ENCODE measurements at regions of chr5 and their contacts with region 1.

Region 1: GRCh38 chr5:115634343-115635132 is 8.7 kb upstream of the TMED7 start:
- DNase-seq: peak; percentile 78
- ATAC-seq: peak; percentile 99
- H3K4me3 ChIP-seq: peak overlapping the region; percentile 57 to 61 (median 60)
- H3K27ac ChIP-seq: peak overlapping the region; percentile 59
- H3K4me1 ChIP-seq: peaks cover 22% of the 10 kb centered on the region
- H3K27me3 ChIP-seq: 0 out of 5 replicates have a peak, but pooled peaks cover 0 to 2% of the 10 kb centered on the region in 2 experiments
- CTCF ChIP-seq: peak; percentile 89
- EP300 ChIP-seq: no peak
- POLR2A ChIP-seq: peak; percentile 23 to 41; a peak in 1 of 4 replicates
- RAD21 ChIP-seq: peak; percentile 79

Region 2: DNA sequence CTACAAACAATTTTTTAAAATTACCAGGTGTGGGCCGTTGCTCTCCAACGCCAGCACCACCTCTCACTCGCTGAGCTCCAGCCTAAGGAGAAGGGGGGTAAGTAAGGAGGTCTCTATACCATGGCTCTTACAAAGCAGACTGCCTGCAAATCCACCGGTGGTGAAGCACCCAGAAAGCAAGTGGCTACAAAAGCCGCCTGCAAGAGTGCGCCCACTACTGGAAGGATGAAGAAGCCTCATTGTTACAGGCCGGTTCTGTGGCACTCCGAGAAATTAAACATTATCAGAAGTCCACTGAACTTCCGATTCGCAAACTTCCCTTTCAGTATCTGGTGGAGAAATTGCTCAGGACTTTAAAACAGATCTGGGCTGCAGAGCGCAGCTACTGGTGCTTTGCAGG is 135.9 kb after region 1 on chr5:
- CTCF ChIA-PET with region 1: no interaction called
- POLR2A ChIA-PET with region 1: no interaction called
- in situ Hi-C with region 1: no loop called
- intact Hi-C with region 1: loop called (anchors 1 kb)
- DNase-seq: peak; percentile 31
- ATAC-seq: peak; percentile 86
- H3K4me3 ChIP-seq: no peak overlapping the region
- H3K27ac ChIP-seq: no peak overlapping the region
- H3K4me1 ChIP-seq: no peaks in the 10 kb centered on the region
- H3K27me3 ChIP-seq: no peaks in the 10 kb centered on the region
- CTCF ChIP-seq: peak; percentile 48
- EP300 ChIP-seq: no peak
- POLR2A ChIP-seq: no peak
- RAD21 ChIP-seq: no peak

Region 3: DNA sequence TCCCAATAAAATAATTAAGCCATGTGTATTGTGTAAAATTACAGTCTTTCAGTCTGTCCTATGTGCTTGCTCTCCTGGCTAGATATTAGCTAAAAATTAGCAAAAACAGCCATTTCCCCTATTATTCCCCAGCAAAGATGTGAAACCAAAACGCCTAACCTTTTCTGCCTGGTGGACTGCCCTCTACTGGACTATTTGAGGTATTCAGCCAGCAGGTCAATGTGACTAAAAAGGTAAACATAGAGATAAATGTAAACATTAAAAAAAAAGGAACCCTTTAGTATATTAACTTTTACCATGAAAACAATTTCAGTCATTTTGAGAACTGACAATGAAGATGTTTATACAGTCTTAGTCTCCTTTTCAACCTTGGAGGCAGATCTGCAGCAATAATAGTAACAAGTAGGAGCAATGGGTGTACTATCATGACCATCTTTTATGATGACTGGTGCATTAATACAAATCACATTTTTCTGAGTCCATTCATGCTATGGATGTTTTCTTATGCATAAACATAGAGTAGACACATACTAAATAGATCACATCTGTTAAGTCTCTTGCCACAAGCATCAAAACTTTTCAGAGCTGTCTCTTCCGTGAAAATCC is 196.7 kb after region 1 on chr5:
- CTCF ChIA-PET with region 1: interaction called, 18 read pairs
- POLR2A ChIA-PET with region 1: no interaction called
- in situ Hi-C with region 1: no loop called
- intact Hi-C with region 1: loop called (anchors 1 kb)
- DNase-seq: peak; percentile 57
- ATAC-seq: peak; percentile 82
- H3K4me3 ChIP-seq: no peak overlapping the region
- H3K27ac ChIP-seq: no peak overlapping the region
- H3K4me1 ChIP-seq: peaks cover 24% of the 10 kb centered on the region
- H3K27me3 ChIP-seq: no peaks in the 10 kb centered on the region
- CTCF ChIP-seq: peak; percentile 75
- EP300 ChIP-seq: no peak
- POLR2A ChIP-seq: no peak
- RAD21 ChIP-seq: peak; percentile 46; the same call in 1 of the 2 replicates

Region 4: DNA sequence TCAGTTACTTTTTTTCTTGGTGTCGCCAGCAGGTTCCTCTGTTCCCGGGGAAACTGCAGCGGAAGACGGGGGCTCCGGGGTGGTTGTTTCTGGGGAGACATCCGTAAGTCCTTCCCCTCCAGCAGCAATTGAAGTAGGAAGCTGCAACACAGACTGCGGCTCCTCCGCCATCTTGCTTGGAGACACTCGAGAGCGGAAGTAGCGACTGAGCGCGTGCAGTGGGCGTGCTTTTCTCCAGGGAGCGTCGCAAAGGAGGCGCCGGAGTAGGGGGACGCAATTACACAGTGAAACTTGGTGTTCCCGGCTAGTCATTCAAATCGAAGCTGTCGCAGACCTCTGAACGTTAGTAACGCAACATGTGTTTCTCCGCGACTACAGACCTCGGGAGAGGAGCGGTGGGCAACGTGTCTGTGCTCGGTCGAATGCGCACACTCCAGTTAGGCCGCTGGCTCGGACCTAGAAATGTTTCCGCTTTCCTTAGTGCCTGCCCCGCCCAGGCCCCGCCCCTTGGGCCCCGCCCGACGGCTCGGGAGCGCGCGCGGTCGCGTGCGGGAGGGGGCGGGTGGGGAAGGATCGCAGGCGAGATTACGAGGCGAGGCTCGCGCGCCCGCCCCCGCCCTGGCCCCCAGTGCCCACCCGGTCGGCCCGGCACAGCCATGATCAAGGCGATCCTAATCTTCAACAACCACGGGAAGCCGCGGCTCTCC is 207.0 kb after region 1 on chr5 and contains the starts of genes AP3S1 and ATG12:
- CTCF ChIA-PET with region 1: interaction called, 15 read pairs
- POLR2A ChIA-PET with region 1: no interaction called
- in situ Hi-C with region 1: no loop called
- intact Hi-C with region 1: loop called (anchors 1 kb)
- DNase-seq: peak; percentile 88
- ATAC-seq: peak; percentile 85
- H3K4me3 ChIP-seq: peak within 1 kb of the TSS; percentile 77 to 98 (median 91)
- H3K27ac ChIP-seq: peak within 1 kb of the TSS; percentile 99
- H3K4me1 ChIP-seq: peaks cover 50% of the 10 kb centered on the region
- H3K27me3 ChIP-seq: no peaks in the 10 kb centered on the region; a peak in 1 of 5 replicates
- CTCF ChIP-seq: 0 out of 2 replicates have a peak, but pooled peaks have one; percentile 10
- EP300 ChIP-seq: no peak
- POLR2A ChIP-seq: peak; percentile 86 to 93
- RAD21 ChIP-seq: peak; percentile 17; the same call in 1 of the 2 replicates
- total RNA-seq, gene AP3S1: 85.9 and 88.8 TPM in 2 replicates
- total RNA-seq, gene ATG12: 45.1 and 46.4 TPM in 2 replicates

Region 5: GRCh38 chr5:115930626-115931337 is 296.2 kb after region 1 on chr5:
- CTCF ChIA-PET with region 1: no interaction called
- POLR2A ChIA-PET with region 1: no interaction called
- in situ Hi-C with region 1: no loop called
- intact Hi-C with region 1: no loop called
- DNase-seq: no peak
- ATAC-seq: no peak
- H3K4me3 ChIP-seq: no peak overlapping the region
- H3K27ac ChIP-seq: no peak overlapping the region
- H3K4me1 ChIP-seq: no peaks in the 10 kb centered on the region
- H3K27me3 ChIP-seq: no peaks in the 10 kb centered on the region
- CTCF ChIP-seq: no peak
- EP300 ChIP-seq: no peak
- POLR2A ChIP-seq: no peak
- RAD21 ChIP-seq: no peak

Region 6: DNA sequence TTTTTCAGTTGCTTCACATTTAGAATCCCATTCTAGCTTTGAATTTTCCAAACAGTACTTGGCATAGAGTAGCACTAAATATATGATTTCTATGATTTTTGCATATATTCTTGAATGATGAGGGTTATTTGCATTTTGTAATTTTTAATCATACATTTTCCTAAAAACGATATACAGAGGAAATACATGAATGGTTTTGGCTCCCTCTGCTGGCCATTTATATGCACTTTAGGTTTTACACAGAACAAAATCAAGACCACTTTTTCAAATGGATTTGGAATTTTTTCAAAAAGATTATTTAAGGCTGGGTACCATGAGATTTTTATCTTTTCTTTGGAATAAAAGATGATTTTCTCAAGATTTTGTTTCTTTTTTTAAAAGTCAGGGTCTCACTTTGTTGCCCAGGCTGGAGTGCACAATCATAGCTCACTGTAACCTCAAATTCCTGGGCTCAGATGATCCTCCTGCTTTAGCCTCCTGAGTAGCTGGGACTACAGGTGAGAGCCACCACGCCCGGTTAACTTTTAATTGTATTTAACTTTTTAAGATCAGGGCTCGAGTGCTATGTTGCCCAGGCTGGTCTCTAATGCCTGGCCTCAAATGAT is 433.6 kb after region 1 on chr5:
- CTCF ChIA-PET with region 1: interaction called, 24 read pairs
- POLR2A ChIA-PET with region 1: no interaction called
- in situ Hi-C with region 1: no loop called
- intact Hi-C with region 1: loop called (anchors 1 kb)
- DNase-seq: peak; percentile 44
- ATAC-seq: peak; percentile 50; the same call in 1 of the 3 replicates
- H3K4me3 ChIP-seq: no peak overlapping the region
- H3K27ac ChIP-seq: no peak overlapping the region
- H3K4me1 ChIP-seq: no peaks in the 10 kb centered on the region
- H3K27me3 ChIP-seq: no peaks in the 10 kb centered on the region
- CTCF ChIP-seq: peak; percentile 59
- EP300 ChIP-seq: no peak
- POLR2A ChIP-seq: no peak
- RAD21 ChIP-seq: no peak